Calu3 (cell line): ENCODE measurements at regions of chr22 and their contacts with region 1.

Region 1: GRCh38 chr22:30005213-30005857 is 74.9 kb upstream of the HORMAD2 start:
- DNase-seq: peak; percentile 75
- H3K4me3 Mint-ChIP-seq: no peak overlapping the region
- H3K27ac Mint-ChIP-seq: no peak overlapping the region
- H3K4me1 Mint-ChIP-seq: peaks cover 18% of the 10 kb centered on the region
- H3K27me3 Mint-ChIP-seq: no peaks in the 10 kb centered on the region
- CTCF ChIP-seq: peak; percentile 95

Region 2: GRCh38 chr22:29615705-29616327 is 389.5 kb before region 1 on chr22:
- CTCF ChIA-PET with region 1: no interaction called
- intact Hi-C with region 1: no loop called
- DNase-seq: no peak
- H3K4me3 Mint-ChIP-seq: no peak overlapping the region
- H3K27ac Mint-ChIP-seq: no peak overlapping the region
- H3K4me1 Mint-ChIP-seq: peaks cover 40% of the 10 kb centered on the region
- H3K27me3 Mint-ChIP-seq: no peaks in the 10 kb centered on the region
- CTCF ChIP-seq: no peak

Region 3: GRCh38 chr22:29635734-29636357 is 369.5 kb before region 1 on chr22:
- CTCF ChIA-PET with region 1: interaction called, 4 read pairs
- intact Hi-C with region 1: loop called (anchors 10 kb)
- DNase-seq: peak; percentile 11
- H3K4me3 Mint-ChIP-seq: no peak overlapping the region
- H3K27ac Mint-ChIP-seq: peak overlapping the region; percentile 52
- H3K4me1 Mint-ChIP-seq: peaks cover 31% of the 10 kb centered on the region
- H3K27me3 Mint-ChIP-seq: no peaks in the 10 kb centered on the region
- CTCF ChIP-seq: peak; percentile 79

Region 4: DNA sequence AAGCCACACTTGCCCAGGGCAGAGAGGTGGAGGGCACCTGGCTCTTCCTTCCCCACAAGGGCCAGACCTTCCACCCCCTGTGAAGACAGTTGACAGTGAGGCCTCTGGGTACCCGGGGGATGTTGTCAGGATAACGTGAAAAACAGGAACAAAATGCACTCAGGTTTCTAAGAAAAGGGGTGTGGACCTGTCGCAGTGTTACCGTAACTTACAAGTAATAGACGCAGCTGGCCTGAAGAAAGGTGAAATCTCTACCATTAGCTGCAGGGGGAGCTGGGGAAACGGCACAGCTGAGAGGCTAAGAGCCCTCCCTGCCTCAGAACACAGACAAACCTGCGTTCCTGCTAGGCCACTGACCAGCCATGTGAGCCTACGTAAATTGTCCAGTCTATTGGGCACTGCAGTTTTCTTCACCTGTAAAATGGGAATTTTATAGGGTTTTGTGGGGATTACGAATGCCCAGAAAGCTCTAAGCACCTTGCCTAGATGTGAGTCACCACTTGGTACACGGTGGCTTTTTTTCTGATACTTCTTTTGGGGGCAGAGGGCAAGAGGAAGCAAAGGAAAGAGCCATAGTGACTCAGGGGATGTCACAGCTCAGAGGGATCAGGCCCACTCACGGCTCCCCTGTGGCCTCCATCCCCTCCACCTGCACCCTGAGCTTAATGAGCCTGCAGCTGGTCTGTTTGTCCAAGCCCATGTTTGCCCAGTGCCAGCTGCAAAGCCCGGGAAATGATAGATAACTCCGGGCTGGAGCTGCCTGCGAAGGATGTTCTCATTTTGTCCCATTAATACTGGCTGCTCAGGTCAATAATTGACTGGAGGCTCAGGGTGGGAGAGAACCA is 304.0 kb before region 1 on chr22:
- CTCF ChIA-PET with region 1: interaction called, 12 read pairs
- intact Hi-C with region 1: loop called (anchors 5 kb)
- DNase-seq: peak; percentile 66
- H3K4me3 Mint-ChIP-seq: no peak overlapping the region
- H3K27ac Mint-ChIP-seq: peak overlapping the region; percentile 43
- H3K4me1 Mint-ChIP-seq: peaks cover 14% of the 10 kb centered on the region
- H3K27me3 Mint-ChIP-seq: peaks cover 3% of the 10 kb centered on the region
- CTCF ChIP-seq: peak; percentile 29

Region 5: DNA sequence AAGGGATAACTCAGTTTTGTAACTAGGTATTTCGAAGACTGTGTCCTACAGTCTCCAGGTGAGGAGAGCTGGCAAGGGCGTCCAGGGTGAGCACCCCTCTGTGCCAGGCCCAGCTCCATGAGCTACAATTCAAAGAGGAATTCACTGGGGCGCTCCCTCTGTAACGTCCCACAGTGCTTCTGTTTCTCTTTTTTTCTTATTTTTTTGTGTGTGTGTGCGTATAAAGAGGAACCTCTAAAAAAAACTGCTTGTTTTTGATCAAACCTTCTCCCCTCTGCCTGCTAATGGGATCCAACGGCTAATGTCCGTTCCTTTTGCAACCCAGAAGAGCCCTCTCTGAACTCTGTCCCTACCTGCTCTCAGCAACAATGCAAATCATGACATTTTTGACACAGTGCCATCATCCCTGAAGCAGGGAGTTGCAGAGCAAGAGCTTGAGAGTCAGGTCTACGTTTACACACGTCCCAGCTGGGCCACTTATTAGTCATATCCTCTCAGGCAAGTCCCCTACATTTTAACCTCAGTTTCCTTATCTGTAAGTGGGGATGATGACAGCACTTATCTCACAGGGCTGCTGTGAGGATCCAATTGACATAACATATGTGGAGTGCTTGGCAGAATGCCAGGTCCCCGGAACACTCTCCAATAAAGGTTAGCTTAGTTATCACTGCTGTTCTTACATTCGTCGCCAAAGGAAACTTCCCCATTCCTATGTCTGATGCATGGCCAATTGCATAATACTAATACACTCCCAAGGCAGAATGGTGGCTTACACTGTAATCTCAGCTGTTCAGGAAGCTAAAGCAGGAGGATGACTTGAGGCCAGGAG is 184.2 kb before region 1 on chr22:
- CTCF ChIA-PET with region 1: interaction called, 14 read pairs
- intact Hi-C with region 1: no loop called
- DNase-seq: peak; percentile 97
- H3K4me3 Mint-ChIP-seq: no peak overlapping the region
- H3K27ac Mint-ChIP-seq: peak overlapping the region; percentile 78
- H3K4me1 Mint-ChIP-seq: peaks cover 17% of the 10 kb centered on the region
- H3K27me3 Mint-ChIP-seq: no peaks in the 10 kb centered on the region
- CTCF ChIP-seq: no peak

Region 6: DNA sequence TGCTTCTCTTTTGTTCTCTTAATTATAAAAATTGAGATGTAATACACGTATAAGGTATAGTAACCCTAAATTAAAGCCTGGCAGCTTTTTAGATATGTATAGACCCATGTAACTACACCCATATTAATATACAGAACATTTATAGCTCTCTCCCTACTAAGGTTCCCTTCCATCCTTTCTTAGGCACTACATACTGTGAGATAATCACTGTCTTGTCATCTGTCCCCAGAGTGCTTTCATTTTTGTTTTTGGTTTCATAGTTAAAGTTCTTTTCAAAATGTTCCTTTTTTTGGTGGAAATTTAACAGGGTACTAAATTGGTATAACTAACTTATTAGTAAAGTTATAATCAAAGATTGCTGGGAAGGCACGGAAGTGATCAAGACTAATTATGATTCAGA is 73.2 kb before region 1 on chr22:
- CTCF ChIA-PET with region 1: no interaction called
- intact Hi-C with region 1: no loop called
- DNase-seq: no peak
- H3K4me3 Mint-ChIP-seq: no peak overlapping the region
- H3K27ac Mint-ChIP-seq: no peak overlapping the region
- H3K4me1 Mint-ChIP-seq: no peaks in the 10 kb centered on the region
- H3K27me3 Mint-ChIP-seq: no peaks in the 10 kb centered on the region
- CTCF ChIP-seq: no peak

Region 7: DNA sequence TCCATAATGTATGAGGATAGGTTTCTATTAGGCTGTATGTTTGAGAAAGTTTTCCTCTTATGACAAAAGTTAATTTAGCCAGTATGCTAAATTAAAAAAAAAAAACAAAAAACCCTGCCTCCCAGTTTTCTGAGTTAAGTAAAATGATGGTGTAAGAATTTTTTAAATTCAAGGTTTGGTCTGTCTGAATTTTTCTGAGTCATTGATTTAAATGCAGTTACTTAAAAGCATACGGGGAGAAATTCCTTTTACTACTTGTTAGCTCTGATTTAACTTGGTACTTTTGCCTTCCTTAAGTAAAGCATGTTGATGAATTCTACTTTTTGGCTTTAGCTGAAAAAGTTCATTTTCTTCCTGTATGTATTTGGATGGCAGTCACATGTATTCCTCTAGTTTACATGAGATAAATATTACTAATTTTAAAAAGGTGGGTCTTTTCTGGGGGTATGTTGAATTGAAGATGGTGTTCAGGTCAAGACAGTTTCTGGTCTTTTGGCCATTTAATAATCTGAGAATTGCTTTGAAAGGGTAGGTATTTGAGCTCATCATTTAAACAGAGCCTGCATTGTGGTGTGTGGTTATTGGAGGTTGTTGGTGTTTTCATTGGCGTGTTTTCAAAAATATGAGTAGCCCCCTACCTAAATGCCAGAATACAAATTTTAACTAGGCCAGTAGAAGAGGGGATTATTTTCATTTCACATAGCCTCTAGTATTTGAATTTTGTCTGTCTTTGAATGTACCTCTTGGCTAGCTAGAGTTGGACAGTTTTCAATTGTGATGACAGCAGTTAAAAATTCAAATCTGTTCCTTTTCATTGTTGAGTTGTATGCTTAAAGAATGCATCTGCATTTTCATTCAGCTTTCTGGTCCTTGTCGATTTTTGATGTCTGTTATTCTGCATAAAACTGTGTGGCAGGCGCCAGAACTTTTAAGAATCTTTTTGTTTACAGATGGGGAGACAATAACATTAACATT is 57.6 kb before region 1 on chr22:
- CTCF ChIA-PET with region 1: no interaction called
- intact Hi-C with region 1: no loop called
- DNase-seq: no peak
- H3K4me3 Mint-ChIP-seq: no peak overlapping the region
- H3K27ac Mint-ChIP-seq: no peak overlapping the region
- H3K4me1 Mint-ChIP-seq: peaks cover 25% of the 10 kb centered on the region
- H3K27me3 Mint-ChIP-seq: no peaks in the 10 kb centered on the region
- CTCF ChIP-seq: no peak

Region 8: DNA sequence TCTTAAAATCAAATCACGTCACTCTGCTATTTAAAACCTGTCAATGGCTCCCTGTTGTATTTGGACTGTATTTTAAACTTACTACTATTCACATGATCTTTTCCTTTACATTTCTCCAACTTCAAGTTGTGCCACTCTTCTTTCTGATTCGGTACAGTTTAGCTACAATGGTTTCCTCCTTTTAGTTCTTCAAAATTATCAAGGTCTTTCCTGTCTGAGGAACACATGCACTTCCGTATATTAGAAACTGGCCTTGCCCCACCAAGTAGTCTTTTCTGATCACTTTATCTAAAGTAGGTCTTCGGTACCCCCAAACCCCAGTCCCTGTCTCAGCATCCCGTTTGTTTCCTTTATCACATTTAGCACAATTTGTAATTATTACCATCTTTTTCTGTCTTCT is 40.6 kb before region 1 on chr22:
- CTCF ChIA-PET with region 1: no interaction called
- intact Hi-C with region 1: no loop called
- DNase-seq: no peak
- H3K4me3 Mint-ChIP-seq: no peak overlapping the region
- H3K27ac Mint-ChIP-seq: no peak overlapping the region
- H3K4me1 Mint-ChIP-seq: no peaks in the 10 kb centered on the region
- H3K27me3 Mint-ChIP-seq: no peaks in the 10 kb centered on the region
- CTCF ChIP-seq: no peak

Region 9: DNA sequence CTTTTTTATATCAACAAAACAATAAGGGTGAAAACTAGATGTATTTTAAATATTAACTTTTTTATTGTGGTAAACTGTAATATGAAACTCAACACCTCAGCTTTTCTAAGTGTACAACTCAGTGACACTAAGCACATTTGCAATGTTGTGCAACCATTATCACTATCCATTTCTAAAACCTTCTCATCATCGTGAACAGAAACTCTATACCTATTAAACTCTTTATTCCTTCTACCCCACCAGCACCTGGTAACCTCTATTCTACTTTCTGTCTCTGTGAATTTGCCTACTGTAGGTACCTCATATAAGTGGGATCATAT is 84.3 kb after region 1 on chr22:
- CTCF ChIA-PET with region 1: interaction called, 7 read pairs
- intact Hi-C with region 1: loop called (anchors 5 kb)
- DNase-seq: no peak
- H3K4me3 Mint-ChIP-seq: no peak overlapping the region
- H3K27ac Mint-ChIP-seq: peak overlapping the region; percentile 48
- H3K4me1 Mint-ChIP-seq: peaks cover 39% of the 10 kb centered on the region
- H3K27me3 Mint-ChIP-seq: no peaks in the 10 kb centered on the region
- CTCF ChIP-seq: no peak